HEK293 (cell line): ENCODE measurements at regions of chr11 and their contacts with region 1.

Region 1: GRCh38 chr11:119728651-119729580 is at the start of gene NECTIN1:
- H3K4me3 ChIP-seq: peak within 1 kb of the TSS; percentile 67
- H3K27ac ChIP-seq: peak within 1 kb of the TSS; percentile 79; the same call in 1 of the 2 replicates
- H3K4me1 ChIP-seq: no peaks in the 10 kb centered on the region
- CTCF ChIP-seq: peak; percentile 84

Region 2: DNA sequence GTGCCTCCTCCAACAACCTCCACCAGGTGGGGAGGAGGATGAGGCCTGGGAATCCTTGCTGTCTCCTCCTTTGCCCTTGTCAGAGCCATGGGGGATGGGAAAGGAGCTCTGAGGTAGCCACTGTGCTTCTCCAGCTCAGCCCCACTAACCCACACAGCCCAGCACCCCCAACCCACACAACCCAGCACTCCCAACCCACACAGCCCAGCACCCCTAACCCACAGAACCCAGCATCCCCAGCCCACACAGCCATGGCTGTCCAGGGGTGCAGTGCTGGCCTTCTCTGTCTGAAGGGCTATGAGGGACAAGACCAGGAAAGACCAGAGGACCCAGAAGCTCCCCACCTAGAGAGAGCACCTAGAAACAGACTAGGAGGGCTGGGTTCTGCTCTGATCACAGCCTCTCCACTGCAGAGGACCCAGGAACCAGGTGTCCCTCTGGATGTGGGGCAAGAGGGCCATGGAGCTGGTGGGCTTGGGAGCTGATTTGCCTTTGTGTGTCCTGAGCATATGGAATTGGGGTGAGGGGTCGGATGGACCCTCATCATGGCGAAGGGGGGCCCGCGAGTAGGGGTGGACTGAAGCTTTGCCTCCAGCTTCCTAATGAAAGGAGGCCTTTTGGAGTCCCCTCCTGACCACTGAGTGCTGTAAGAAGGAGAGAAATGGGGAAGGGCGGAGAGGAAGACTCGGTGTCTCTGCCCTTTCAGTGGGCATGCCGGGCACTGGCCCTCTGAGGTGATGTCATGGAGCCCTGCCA is 188.4 kb before region 1 on chr11:
- CTCF ChIA-PET with region 1: no interaction called
- POLR2A ChIA-PET with region 1: no interaction called
- H3K4me3 ChIP-seq: no peak overlapping the region
- H3K27ac ChIP-seq: no peak overlapping the region
- H3K4me1 ChIP-seq: no peaks in the 10 kb centered on the region
- CTCF ChIP-seq: no peak

Region 3: DNA sequence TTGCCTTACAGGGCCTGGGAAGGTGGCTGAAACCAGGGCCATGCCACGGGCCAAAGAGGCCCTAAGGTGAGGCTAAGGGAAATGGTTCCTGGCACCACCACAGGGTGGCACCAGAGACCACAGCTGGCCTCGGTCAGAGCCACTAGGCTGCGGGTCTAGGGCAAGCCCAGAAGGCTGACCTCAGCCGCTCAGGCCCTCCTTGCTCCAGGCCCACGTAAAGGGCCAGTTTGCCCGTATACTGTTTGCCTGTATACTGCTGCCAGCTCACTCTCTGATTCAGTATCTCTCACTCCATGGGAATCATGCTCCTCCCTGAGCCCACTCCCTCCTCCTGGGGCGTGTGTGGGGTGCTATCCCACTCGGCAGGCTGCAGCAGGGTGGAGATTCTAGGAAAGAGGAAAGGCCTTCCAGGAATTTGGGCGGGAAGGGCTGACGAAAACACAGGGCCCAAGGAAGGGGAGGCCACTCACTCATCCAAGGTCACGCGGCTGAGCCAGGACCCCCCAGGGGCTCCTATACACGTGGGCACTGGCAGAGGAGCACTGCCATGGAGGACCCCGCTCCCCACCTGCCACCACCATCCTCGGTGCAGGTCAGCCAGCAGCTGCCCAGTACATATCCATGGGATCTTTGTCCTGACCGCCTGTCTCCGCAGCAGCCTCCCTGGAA is 62.3 kb before region 1 on chr11:
- CTCF ChIA-PET with region 1: interaction called, 10 read pairs
- POLR2A ChIA-PET with region 1: no interaction called
- H3K4me3 ChIP-seq: no peak overlapping the region
- H3K27ac ChIP-seq: no peak overlapping the region
- H3K4me1 ChIP-seq: no peaks in the 10 kb centered on the region
- CTCF ChIP-seq: peak; percentile 78

Region 4: DNA sequence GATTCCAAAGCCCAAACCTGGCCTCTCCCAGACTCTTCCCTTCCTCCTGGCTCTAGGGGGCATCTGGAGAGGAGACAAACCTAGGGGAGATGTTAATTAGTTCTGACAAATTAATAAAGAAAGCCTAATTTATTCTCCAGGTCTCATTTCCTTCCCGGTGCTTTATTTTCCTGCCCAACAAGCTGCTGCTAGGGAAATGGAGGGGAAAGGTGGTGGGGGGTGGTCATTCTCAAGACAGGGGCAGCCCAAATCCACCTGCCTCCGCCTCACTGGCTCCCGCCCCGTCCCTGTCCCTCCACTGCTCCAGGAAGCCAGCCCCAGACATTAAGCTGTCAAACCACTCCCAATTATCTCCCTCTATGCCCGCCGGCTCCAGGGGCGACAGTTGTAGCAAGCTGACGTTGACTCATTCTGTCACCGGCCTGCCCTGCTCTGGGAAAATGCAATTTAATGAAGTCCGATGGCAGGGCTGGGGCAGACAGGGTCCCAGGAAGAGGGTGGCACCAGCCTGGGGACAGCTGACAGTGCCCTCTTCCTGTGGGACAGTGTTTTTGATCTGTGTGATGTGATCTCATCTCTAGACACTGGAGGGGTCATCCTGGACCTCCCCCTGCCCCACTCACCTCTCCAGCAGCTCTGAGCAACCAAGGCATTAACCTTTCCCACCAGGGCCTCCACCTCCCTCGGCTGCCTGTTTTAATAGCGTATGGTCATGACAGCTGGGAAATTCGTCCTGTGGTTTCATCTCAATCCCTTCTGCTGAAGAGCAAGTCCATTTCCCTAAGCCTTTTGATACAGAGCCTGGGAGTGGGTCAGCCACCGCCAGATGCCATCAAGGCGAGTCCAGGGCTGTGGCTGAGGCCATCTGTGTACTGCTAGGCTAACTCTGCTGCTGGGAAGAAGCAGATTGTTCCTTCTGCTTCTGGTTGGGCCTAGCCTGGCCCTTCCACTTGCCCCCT is 27.0 kb before region 1 on chr11:
- CTCF ChIA-PET with region 1: interaction called, 10 read pairs
- POLR2A ChIA-PET with region 1: interaction called, 4 read pairs
- H3K4me3 ChIP-seq: no peak overlapping the region
- H3K27ac ChIP-seq: no peak overlapping the region
- H3K4me1 ChIP-seq: no peaks in the 10 kb centered on the region
- CTCF ChIP-seq: no peak

Region 5: DNA sequence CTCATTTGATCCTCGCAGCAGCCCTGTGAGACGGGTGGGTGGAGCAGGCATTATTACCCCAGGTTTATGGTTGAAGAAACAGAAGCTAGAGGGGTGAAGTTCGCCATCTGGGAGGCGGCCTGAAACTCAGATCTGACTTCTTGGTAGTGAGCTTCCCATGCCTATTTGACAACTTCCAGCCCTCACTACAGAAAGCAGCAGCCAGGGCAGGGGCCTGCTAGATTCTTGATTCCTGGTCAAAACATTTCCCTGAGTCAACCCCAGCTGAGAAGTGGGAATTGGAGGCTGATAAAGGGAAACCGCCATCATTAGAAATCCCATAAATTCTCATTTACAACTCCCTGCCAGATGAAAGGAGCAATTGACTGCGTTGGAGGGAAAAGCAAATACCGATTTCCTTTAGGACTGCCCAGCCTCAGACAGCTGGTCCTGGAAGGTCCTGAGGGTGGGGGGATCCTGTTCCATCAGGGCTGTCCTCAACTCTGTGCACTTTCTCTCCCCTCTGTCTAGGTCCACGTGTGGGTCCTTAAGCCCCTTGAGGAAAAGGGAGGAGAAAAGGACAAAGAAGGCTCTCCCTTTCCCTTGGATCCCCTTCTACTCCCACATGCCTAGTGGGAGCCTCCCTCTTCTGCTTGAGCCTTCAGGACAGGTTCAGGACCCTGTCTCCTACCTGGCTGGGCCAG is 10.2 kb after region 1 on chr11:
- CTCF ChIA-PET with region 1: interaction called, 11 read pairs
- POLR2A ChIA-PET with region 1: no interaction called
- H3K4me3 ChIP-seq: no peak overlapping the region
- H3K27ac ChIP-seq: no peak overlapping the region
- H3K4me1 ChIP-seq: peaks cover 3% of the 10 kb centered on the region; the same call in 1 of the 2 replicates
- CTCF ChIP-seq: no peak

Region 6: GRCh38 chr11:119774172-119774763 is 45.4 kb after region 1 on chr11:
- CTCF ChIA-PET with region 1: no interaction called
- POLR2A ChIA-PET with region 1: no interaction called
- H3K4me3 ChIP-seq: no peak overlapping the region
- H3K27ac ChIP-seq: no peak overlapping the region
- H3K4me1 ChIP-seq: no peaks in the 10 kb centered on the region
- CTCF ChIP-seq: no peak

Region 7: GRCh38 chr11:120153221-120153620 is 424.3 kb after region 1 on chr11:
- CTCF ChIA-PET with region 1: no interaction called
- POLR2A ChIA-PET with region 1: no interaction called
- H3K4me3 ChIP-seq: no peak overlapping the region
- H3K27ac ChIP-seq: no peak overlapping the region
- H3K4me1 ChIP-seq: no peaks in the 10 kb centered on the region
- CTCF ChIP-seq: no peak